ENCODE measurements at regions of chr4 and their contacts with region 1.

Region 1: DNA sequence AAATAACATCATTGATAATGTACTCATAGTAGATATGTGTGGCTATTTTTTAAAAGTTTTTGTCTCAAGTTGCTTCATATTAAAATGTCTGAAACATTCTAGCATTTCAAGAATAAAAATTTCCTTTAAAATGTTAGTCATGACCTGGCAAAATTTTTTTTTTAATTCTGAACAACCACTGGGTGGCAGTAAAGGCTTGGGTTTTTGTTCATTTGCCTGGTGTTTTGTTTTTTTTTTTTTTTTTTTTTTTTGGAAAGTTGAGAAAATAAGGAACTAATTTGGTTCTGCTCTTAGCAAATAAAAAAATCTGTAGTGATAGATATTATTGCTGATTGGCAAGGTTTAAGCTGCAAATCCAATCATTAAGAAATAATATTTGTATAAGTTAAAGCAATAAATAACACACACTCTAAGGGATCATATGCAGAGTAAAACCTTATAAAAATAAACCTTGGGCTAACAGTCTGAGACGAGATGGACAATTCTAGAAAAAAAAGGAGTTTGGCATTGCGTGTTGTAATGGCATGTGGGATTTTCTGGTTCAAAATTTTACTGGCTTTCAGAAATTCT is 81.4 kb downstream of the CEP44 start:
- DNase-seq: peak; percentile 38
- ATAC-seq: no peak
- H3K4me3 ChIP-seq: no peak overlapping the region
- H3K27ac ChIP-seq: no peak overlapping the region
- H3K4me1 ChIP-seq: no peaks in the 10 kb centered on the region
- H3K27me3 ChIP-seq: no peaks in the 10 kb centered on the region
- CTCF ChIP-seq: peak; percentile 62
- POLR2A ChIP-seq: no peak
- RAD21 ChIP-seq: peak; percentile 65

Region 2: GRCh38 chr4:174352061-174352819 is 12.9 kb before region 1 on chr4:
- CTCF ChIA-PET with region 1: no interaction called
- POLR2A ChIA-PET with region 1: no interaction called
- dilution Hi-C with region 1: no loop called
- in situ Hi-C with region 1: no loop called
- intact Hi-C with region 1: no loop called
- DNase-seq: no peak
- ATAC-seq: no peak
- H3K4me3 ChIP-seq: no peak overlapping the region
- H3K27ac ChIP-seq: no peak overlapping the region
- H3K4me1 ChIP-seq: no peaks in the 10 kb centered on the region
- H3K27me3 ChIP-seq: no peaks in the 10 kb centered on the region
- CTCF ChIP-seq: no peak
- POLR2A ChIP-seq: no peak
- RAD21 ChIP-seq: no peak

Region 3: GRCh38 chr4:174631901-174632758 is 267.0 kb after region 1 on chr4:
- CTCF ChIA-PET with region 1: no interaction called
- POLR2A ChIA-PET with region 1: no interaction called
- dilution Hi-C with region 1: no loop called
- in situ Hi-C with region 1: loop called (anchors 5 kb)
- intact Hi-C with region 1: loop called (anchors 1 kb)
- DNase-seq: peak; percentile 23
- ATAC-seq: 0 out of 2 replicates have a peak, but pooled peaks have one; percentile 35
- H3K4me3 ChIP-seq: no peak overlapping the region
- H3K27ac ChIP-seq: no peak overlapping the region
- H3K4me1 ChIP-seq: no peaks in the 10 kb centered on the region
- H3K27me3 ChIP-seq: no peaks in the 10 kb centered on the region
- CTCF ChIP-seq: peak; percentile 57
- POLR2A ChIP-seq: no peak
- RAD21 ChIP-seq: peak; percentile 54

Region 4: GRCh38 chr4:174713819-174714218 is 348.7 kb after region 1 on chr4:
- CTCF ChIA-PET with region 1: no interaction called
- POLR2A ChIA-PET with region 1: no interaction called
- dilution Hi-C with region 1: no loop called
- in situ Hi-C with region 1: no loop called
- intact Hi-C with region 1: loop called (anchors 1 kb)
- DNase-seq: no peak
- ATAC-seq: no peak
- H3K4me3 ChIP-seq: no peak overlapping the region
- H3K27ac ChIP-seq: no peak overlapping the region
- H3K4me1 ChIP-seq: no peaks in the 10 kb centered on the region
- H3K27me3 ChIP-seq: no peaks in the 10 kb centered on the region
- CTCF ChIP-seq: no peak
- POLR2A ChIP-seq: no peak
- RAD21 ChIP-seq: no peak

Region 5: DNA sequence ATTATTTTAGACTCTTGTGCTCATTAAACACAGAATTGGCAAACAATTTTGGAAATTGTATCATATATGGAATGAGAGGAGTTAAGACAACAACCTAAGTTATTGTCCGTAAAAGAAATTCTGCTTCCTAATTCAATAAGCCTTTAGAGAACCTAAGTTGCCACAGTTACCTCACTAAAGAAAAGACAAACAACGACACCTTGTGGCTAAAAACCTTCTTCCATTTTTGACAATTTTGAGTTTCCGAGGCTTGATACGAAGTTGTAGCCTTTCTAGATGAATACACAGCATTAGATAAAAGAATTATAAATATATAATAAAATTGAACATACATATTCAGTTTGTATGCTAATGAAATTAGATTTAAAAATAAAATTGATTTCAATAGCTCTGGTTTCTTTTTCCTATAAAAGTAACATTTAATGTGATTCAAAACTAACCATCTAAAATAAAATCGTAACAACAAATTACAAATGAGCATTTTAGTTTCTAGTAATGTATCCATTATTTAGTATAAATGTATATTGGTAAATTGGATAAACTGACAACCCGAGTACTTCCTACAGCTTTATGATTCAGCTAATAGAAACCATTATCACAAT is 1171.8 kb after region 1 on chr4:
- CTCF ChIA-PET with region 1: no interaction called
- POLR2A ChIA-PET with region 1: no interaction called
- dilution Hi-C with region 1: no loop called
- in situ Hi-C with region 1: loop called (anchors 25 kb)
- intact Hi-C with region 1: loop called (anchors 1 kb)
- DNase-seq: peak; percentile 62
- ATAC-seq: peak; percentile 46
- H3K4me3 ChIP-seq: no peak overlapping the region
- H3K27ac ChIP-seq: no peak overlapping the region
- H3K4me1 ChIP-seq: no peaks in the 10 kb centered on the region
- H3K27me3 ChIP-seq: no peaks in the 10 kb centered on the region
- CTCF ChIP-seq: peak; percentile 58
- POLR2A ChIP-seq: no peak
- RAD21 ChIP-seq: peak; percentile 77

Region 6: GRCh38 chr4:175891851-175892250 is 1526.7 kb after region 1 on chr4:
- CTCF ChIA-PET with region 1: no interaction called
- POLR2A ChIA-PET with region 1: no interaction called
- dilution Hi-C with region 1: no loop called
- in situ Hi-C with region 1: no loop called
- intact Hi-C with region 1: loop called (anchors 2 kb)
- DNase-seq: peak; percentile 4
- ATAC-seq: peak; percentile 27; the same call in 1 of the 2 replicates
- H3K4me3 ChIP-seq: no peak overlapping the region
- H3K27ac ChIP-seq: no peak overlapping the region
- H3K4me1 ChIP-seq: no peaks in the 10 kb centered on the region
- H3K27me3 ChIP-seq: no peaks in the 10 kb centered on the region
- CTCF ChIP-seq: peak; percentile 26; the same call in 1 of the 2 replicates
- POLR2A ChIP-seq: no peak
- RAD21 ChIP-seq: no peak

Region 7: DNA sequence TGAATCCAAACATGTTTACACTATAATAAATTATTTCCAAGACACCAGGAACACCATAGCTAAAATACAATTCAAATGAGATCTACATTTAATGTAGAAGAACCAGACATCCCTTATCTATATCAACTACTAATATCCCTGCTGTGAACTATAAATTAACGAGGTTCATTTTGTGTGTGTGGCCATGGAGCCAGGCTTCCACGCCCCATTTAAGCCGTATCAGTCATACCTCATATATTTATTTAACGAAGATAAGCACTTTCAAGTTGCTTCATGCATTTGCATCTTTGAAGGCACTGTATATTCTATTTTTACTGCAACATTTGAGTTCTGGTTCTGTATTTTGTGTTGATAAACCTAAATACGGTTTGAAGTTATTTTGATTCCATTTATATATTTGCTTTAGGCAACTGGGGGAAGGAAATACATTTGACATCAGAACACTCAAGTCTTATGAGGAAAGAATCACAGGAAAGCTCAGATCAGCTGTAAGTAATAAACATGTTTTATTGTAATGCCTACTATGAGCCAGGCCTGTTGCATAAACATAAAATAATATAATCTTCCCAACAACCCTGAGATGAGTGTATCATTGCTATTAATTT is 1655.5 kb after region 1 on chr4:
- CTCF ChIA-PET with region 1: no interaction called
- POLR2A ChIA-PET with region 1: no interaction called
- dilution Hi-C with region 1: no loop called
- in situ Hi-C with region 1: no loop called
- intact Hi-C with region 1: loop called (anchors 10 kb)
- DNase-seq: no peak
- ATAC-seq: no peak
- H3K4me3 ChIP-seq: no peak overlapping the region
- H3K27ac ChIP-seq: no peak overlapping the region
- H3K4me1 ChIP-seq: no peaks in the 10 kb centered on the region
- H3K27me3 ChIP-seq: no peaks in the 10 kb centered on the region; the same call in 1 of the 2 replicates
- CTCF ChIP-seq: no peak
- POLR2A ChIP-seq: no peak
- RAD21 ChIP-seq: no peak